ENCODE measurements at regions of chr5 and their contacts with region 1.

Region 1: GRCh38 chr5:38441453-38442246 is 114.8 kb downstream of the LIFR start:
- DNase-seq: no peak
- H3K4me3 ChIP-seq: no peak overlapping the region
- H3K27ac ChIP-seq: no peak overlapping the region
- H3K4me1 ChIP-seq: peaks cover 0 to 24% (median 16%) of the 10 kb centered on the region in 4 donors
- H3K27me3 ChIP-seq: no peaks in the 10 kb centered on the region
- CTCF ChIP-seq: peak in 2 of 3 experiments; percentile 94 to 97
- EP300 ChIP-seq: no peak
- POLR2A ChIP-seq: no peak

Region 2: DNA sequence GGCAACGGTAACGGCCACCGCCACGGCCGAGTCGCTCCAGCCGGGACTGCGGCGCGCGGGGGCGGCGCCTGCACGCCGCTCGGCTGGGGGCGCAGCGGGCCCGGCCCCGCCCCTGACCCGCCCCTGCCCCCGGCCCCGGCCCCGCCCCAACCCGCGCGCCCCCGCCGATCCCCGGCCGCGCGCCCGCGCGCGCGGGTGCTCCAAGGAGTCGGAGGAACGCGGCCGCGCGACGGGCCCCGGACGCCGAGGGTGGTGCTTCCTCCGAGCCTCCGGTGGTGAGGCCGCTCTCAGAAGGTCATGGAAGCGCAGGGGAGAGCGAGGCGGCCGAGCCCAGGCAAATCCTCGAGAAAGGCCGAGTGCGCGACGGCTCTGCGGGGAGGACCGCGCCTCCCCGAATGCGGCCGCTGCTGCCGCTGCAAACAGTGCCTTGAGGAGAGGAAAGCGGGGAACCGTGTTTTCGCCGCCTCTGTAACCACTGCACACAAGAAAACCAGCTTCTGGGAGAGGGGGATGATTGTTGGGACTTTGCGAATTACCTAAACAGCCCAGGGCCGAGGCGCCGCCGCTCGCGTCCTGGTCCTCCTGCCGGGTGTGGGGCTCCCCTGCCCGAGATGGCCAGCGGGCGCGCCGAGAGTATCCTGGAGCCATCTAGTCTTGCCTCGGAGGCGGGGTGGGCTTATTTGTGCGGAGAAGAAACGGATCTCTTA is 115.1 kb after region 1 on chr5 and contains the start of gene LIFR:
- intact Hi-C with region 1: loop called (anchors 5 kb)
- DNase-seq: no peak
- H3K4me3 ChIP-seq: peak within 1 kb of the TSS; percentile 81 to 98 (median 92)
- H3K27ac ChIP-seq: peak within 1 kb of the TSS; percentile 89 to 98 (median 96)
- H3K4me1 ChIP-seq: peaks cover 9 to 45% (median 31%) of the 10 kb centered on the region in 4 donors
- H3K27me3 ChIP-seq: no peaks in the 10 kb centered on the region
- CTCF ChIP-seq: peak in 1 of 3 experiments; percentile 7
- EP300 ChIP-seq: no peak
- POLR2A ChIP-seq: peak; percentile 60
- total RNA-seq, gene LIFR: 72.3 to 102 (median 90.1) TPM

Region 3: DNA sequence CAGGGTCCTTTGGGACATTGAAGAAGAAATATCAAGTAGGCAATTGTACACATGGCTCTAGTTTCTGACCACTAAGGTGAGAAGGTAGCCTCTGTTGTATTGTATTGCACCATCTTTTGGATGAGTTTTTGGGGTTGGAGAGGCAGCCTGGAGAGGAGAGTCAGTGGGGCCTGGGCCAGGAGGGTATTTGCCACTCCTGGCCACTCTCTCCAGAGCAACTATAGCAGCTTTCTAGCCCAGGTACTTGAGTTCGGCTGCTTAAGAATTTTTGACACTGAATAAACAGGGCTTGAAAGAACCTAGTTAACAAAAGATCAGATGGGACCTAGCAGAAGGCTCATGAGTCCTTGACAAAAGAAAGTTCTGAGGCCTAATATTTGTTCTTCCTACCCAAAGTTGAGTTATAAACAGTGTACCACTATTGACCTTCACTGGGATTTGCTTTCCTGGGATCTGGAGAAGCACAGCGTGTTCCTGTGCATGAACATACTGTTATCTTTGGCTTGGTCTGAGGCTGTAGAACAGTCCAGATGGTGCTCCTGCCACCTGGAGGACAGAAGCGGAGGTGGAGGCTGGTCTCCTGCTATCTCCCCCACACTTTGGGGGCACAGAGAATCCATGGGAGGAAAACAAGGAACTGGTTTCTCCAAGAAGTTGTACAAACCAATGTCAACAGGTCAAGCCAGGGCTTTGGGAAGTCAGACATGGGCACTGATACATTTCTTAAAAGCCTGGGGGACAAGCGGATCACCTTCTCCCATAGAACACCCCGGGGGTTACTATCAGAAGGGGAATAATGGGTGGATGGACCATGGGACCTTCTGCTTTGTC is 225.2 kb after region 1 on chr5:
- intact Hi-C with region 1: loop called (anchors 10 kb)
- DNase-seq: no peak
- H3K4me3 ChIP-seq: no peak overlapping the region
- H3K27ac ChIP-seq: peak overlapping the region in 2 of 4 donors; percentile 41 to 51
- H3K4me1 ChIP-seq: peaks cover 5 to 16% (median 7%) of the 10 kb centered on the region in 4 donors
- H3K27me3 ChIP-seq: no peaks in the 10 kb centered on the region
- CTCF ChIP-seq: peak; percentile 53 to 62 (median 59)
- EP300 ChIP-seq: no peak
- POLR2A ChIP-seq: no peak

Region 4: GRCh38 chr5:38809388-38810359 is 368.0 kb after region 1 on chr5:
- intact Hi-C with region 1: loop called (anchors 2 kb)
- DNase-seq: peak; percentile 96
- H3K4me3 ChIP-seq: no peak overlapping the region
- H3K27ac ChIP-seq: peak overlapping the region in 2 of 4 donors; percentile 23 to 52
- H3K4me1 ChIP-seq: peaks cover 12 to 43% (median 19%) of the 10 kb centered on the region in 4 donors
- H3K27me3 ChIP-seq: no peaks in the 10 kb centered on the region
- CTCF ChIP-seq: peak; percentile 75 to 87 (median 85)
- EP300 ChIP-seq: no peak
- POLR2A ChIP-seq: no peak